Aorta (tissue), 5 donors: ENCODE measurements at regions of chr12 and their contacts with region 1.

Region 1: GRCh38 chr12:10562306-10562933 is 51.0 kb downstream of the MAGOHB start:
- DNase-seq: no peak
- ATAC-seq: no peak
- H3K4me3 ChIP-seq: no peak overlapping the region
- H3K27ac ChIP-seq: no peak overlapping the region
- H3K4me1 ChIP-seq: no peaks in the 10 kb centered on the region
- H3K27me3 ChIP-seq: peaks cover 0 to 2% of the 10 kb centered on the region in 2 donors

Region 2: DNA sequence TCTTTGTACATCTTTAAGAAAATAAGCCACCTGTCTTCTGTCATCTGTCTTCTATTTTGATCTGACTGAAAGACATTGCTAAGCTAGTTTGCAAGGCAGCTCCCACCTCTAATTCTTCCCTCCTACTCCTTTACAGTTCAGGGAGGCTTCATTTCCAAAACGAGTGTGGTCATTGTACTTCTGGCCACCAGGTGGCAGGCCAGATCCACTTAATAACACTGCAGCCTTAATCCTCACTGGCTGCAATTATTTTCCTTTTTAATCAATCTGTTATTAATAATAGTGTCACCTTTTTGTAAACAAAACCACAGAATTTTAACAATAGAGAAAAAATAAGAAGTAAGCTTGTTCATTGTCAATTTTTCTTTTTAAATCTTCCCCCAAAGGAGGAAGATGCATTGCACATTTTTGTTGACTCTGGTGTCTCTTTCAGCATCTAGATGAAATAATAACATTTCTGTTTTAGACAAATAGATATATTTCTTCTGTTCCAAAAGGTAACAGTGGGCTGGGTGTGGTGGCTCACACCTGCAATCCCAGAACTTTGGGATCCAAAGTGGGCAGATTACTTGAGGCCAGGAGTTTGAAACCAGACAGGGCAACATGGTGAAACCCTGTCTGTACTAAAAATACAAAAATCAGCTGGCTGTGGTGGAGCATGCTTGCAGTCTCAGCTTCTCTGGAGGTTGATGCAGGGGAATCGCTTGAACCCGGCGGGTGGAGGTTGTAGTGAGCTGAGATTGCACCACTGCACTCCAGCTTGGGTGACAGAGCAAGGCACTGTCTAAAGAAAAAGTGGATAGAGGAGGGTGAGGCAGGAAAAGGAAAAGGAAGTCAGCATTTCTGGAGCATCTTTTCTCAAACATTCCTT is 326.4 kb before region 1 on chr12:
- intact Hi-C with region 1: loop called (anchors 2 kb)
- DNase-seq: no peak
- ATAC-seq: peak; percentile 89
- H3K4me3 ChIP-seq: no peak overlapping the region
- H3K27ac ChIP-seq: no peak overlapping the region
- H3K4me1 ChIP-seq: no peaks in the 10 kb centered on the region
- H3K27me3 ChIP-seq: no peaks in the 10 kb centered on the region

Region 3: DNA sequence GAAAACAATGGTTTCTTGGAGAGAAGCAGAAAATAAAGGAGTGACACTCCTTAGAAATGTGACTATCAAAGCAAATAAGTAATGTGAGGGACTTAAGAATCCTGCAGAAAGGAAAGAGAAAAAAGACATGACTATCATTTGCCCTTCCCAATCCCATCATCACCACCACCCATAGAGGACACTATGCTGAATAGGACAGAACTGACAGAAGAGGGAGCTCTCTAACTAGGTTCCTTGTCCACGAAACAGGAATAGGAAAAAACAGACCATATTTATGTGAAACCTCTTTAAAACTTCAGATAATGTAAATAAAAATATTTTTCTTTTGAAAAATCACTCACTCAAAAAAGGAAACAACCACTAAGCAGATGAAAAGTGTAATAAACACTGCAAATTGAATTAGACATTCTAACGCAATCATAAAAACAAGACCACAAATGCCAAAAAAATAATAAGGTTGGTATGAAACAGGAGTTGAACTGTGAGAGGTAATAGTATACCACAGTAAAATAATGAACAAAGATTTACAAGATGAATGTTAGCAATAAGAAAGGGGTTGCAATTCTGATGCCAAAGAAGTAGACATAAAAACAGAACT is 230.7 kb before region 1 on chr12:
- intact Hi-C with region 1: loop called (anchors 5 kb)
- DNase-seq: no peak
- ATAC-seq: no peak
- H3K4me3 ChIP-seq: no peak overlapping the region
- H3K27ac ChIP-seq: no peak overlapping the region
- H3K4me1 ChIP-seq: no peaks in the 10 kb centered on the region
- H3K27me3 ChIP-seq: no peaks in the 10 kb centered on the region

Region 4: GRCh38 chr12:10600988-10601387 is 38.6 kb after region 1 on chr12:
- intact Hi-C with region 1: no loop called
- DNase-seq: no peak
- ATAC-seq: no peak
- H3K4me3 ChIP-seq: no peak overlapping the region
- H3K27ac ChIP-seq: no peak overlapping the region
- H3K4me1 ChIP-seq: no peaks in the 10 kb centered on the region
- H3K27me3 ChIP-seq: no peaks in the 10 kb centered on the region